ENCODE measurements at regions of chr6 and their contacts with region 1.

Region 1: DNA sequence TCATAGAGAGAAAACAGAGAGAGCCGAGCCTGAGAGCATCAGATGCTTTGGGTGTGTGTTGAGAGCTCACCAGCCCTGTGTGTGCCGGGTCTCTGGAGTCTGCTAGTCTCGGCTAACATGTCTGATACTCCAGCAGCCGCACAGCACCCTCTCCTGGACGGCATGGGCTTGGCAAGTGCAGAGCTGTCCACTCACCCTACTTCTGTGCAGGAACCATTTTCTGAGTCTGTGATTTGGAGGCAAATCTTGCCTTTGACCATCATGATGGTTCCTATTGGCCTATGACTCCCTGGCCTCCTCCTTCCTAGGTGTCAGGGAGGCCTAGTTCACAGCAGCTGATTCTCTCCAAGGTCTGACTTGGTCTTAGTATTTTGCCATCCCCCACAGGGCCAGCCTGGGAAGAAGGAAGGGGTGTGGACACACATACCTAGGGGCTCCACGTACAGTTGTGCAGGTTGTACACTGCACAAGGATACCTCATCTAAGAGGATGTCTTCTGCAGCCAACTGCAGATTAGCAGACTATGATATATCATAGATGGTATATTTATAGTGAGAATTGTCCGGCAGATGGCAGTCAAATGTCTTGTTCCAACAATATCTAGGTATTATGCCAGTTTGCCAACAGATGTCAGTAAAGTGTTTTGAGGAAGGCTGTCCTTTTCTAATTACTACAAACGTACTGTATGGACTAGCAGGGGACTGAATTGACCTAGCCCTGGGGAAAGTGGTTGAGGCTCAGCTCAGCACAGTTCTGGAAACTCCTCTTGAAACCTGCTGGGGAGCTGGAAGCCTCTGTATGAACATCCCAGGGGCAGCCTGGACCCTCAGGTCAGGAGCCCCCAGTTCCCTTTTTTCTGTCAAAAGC is 13.0 kb downstream of the FGD2 start:
- DNase-seq: peak; percentile 77
- ATAC-seq: peak; percentile 96
- H3K4me3 ChIP-seq: no peak overlapping the region
- H3K27ac ChIP-seq: no peak overlapping the region; the same call in 1 of the 2 replicates
- H3K4me1 ChIP-seq: peaks cover 18% of the 10 kb centered on the region
- H3K27me3 ChIP-seq: no peaks in the 10 kb centered on the region
- CTCF ChIP-seq: peak; percentile 96

Region 2: DNA sequence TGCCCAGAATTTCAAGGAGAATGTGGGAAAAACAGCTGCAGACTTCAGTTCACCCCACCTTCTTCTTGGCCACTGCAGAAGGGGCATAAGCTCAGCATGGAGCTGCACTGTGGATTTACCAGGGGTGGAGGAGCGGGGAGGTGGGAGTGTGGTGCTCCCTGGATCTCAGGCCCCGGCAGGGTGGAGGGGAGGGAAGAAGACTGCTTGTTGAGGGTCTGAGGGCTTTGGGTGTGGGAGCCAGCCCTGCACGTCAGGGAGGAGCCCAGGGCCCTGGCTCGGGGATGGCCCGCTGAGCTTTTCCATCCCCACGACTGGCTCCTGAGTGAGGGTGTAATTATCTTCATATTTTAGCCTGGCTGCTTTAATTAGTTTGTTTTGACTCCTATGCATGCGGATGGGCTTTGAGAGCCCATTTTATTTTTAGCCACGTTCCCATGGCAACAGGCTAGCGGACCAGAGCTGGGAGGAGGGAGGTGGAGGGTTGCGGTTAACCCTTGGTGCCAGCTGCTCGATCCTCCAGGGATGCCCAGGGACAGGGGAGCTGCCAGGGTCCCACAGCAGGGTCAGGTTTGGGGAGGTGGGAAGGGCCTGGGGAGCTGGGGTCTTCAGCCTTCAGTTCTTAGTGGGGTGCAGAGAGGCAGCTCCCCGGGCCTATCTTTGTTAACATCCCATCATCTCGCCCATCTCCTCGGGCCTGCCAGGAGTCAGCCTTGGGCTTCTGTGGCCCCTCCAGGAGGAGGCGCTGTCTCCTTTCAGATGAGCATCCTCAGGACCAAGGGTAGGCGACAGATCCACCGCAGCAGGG is 252.6 kb before region 1 on chr6:
- CTCF ChIA-PET with region 1: interaction called, 11 read pairs
- POLR2A ChIA-PET with region 1: no interaction called
- in situ Hi-C with region 1: no loop called
- intact Hi-C with region 1: loop called (anchors 1 kb)
- DNase-seq: no peak
- ATAC-seq: peak; percentile 94
- H3K4me3 ChIP-seq: no peak overlapping the region
- H3K27ac ChIP-seq: no peak overlapping the region
- H3K4me1 ChIP-seq: peaks cover 5% of the 10 kb centered on the region
- H3K27me3 ChIP-seq: no peaks in the 10 kb centered on the region
- CTCF ChIP-seq: peak; percentile 95

Region 3: GRCh38 chr6:36809941-36810803 is 208.3 kb before region 1 on chr6:
- CTCF ChIA-PET with region 1: no interaction called
- POLR2A ChIA-PET with region 1: no interaction called
- in situ Hi-C with region 1: no loop called
- intact Hi-C with region 1: no loop called
- DNase-seq: no peak
- ATAC-seq: no peak
- H3K4me3 ChIP-seq: no peak overlapping the region
- H3K27ac ChIP-seq: no peak overlapping the region
- H3K4me1 ChIP-seq: no peaks in the 10 kb centered on the region
- H3K27me3 ChIP-seq: no peaks in the 10 kb centered on the region
- CTCF ChIP-seq: peak; percentile 48; the same call in 1 of the 2 replicates

Region 4: GRCh38 chr6:36885461-36886401 is 132.7 kb before region 1 on chr6 and contains the start of gene C6orf89:
- CTCF ChIA-PET with region 1: interaction called, 15 read pairs
- POLR2A ChIA-PET with region 1: no interaction called
- in situ Hi-C with region 1: no loop called
- intact Hi-C with region 1: loop called (anchors 2 kb)
- DNase-seq: peak; percentile 89
- ATAC-seq: peak; percentile 100
- H3K4me3 ChIP-seq: peak within 1 kb of the TSS; percentile 73 to 100
- H3K27ac ChIP-seq: peak within 1 kb of the TSS; percentile 98
- H3K4me1 ChIP-seq: peaks cover 8% of the 10 kb centered on the region; the same call in 1 of the 2 replicates
- H3K27me3 ChIP-seq: no peaks in the 10 kb centered on the region
- CTCF ChIP-seq: peak; percentile 89
- total RNA-seq, gene C6orf89: 59.2 TPM

Region 5: DNA sequence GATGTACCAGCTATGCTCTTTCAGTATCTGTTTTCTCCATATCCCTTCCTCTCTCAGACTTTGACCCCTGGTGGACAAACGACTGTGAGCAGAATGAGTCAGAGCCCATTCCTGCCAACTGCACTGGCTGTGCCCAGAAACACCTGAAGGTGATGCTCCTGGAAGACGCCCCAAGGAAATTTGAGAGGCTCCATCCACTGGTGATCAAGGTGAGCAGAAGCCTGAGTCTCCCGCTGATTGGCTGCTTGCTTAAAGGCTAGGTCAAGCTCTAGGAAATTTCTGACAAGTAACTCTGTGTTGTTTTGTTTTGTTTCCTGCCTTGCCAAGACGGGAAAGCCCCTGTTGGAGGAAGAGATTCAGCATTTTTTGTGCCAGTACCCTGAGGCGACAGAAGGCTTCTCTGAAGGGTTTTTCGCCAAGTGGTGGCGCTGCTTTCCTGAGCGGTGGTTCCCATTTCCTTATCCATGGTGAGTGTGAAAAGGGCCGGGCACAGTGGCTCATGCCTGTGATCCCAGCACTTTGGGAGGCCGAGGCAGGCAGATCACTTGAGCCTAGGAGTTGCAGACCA is 104.1 kb before region 1 on chr6:
- CTCF ChIA-PET with region 1: interaction called, 11 read pairs
- POLR2A ChIA-PET with region 1: no interaction called
- in situ Hi-C with region 1: no loop called
- intact Hi-C with region 1: no loop called
- DNase-seq: peak; percentile 42
- ATAC-seq: peak; percentile 83
- H3K4me3 ChIP-seq: no peak overlapping the region
- H3K27ac ChIP-seq: no peak overlapping the region; the same call in 1 of the 2 replicates
- H3K4me1 ChIP-seq: peaks cover 36% of the 10 kb centered on the region
- H3K27me3 ChIP-seq: no peaks in the 10 kb centered on the region
- CTCF ChIP-seq: peak; percentile 65

Region 6: DNA sequence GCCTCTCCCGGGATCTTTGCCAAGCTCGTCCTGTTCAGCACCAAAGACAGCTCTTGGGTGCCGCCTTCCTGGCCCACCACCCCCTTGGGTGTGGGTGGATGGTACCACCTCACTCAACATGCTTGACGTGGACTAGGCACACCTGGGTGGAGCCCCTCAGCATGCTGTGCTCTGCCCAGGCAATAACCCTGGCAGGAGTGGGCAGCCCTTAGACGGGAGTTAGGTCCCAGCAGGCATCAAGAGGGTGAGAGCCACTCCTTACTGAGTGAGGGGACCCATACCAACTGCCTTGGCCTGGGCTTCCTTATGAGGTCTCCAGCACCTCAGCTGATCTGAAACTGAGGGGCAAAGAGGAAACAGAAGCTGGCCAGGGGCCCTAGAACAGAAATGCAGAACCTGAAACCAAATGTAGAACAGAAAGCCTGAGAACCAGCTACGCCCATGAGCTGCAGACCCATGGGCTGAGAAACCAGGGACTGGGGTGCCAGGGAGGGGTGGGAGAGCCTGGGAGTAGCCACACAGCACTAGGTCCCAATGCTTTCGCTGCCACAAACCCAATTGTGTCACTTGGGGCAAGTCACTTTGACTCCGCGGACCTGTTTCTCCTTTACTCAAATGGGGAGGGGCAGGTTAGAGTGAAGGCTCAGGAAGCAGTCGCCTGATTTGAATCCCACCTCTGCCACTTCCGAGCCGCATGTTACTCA is 10.9 kb before region 1 on chr6:
- CTCF ChIA-PET with region 1: interaction called, 11 read pairs
- POLR2A ChIA-PET with region 1: no interaction called
- in situ Hi-C with region 1: no loop called
- intact Hi-C with region 1: no loop called
- DNase-seq: no peak
- ATAC-seq: no peak
- H3K4me3 ChIP-seq: no peak overlapping the region
- H3K27ac ChIP-seq: no peak overlapping the region
- H3K4me1 ChIP-seq: no peaks in the 10 kb centered on the region
- H3K27me3 ChIP-seq: no peaks in the 10 kb centered on the region
- CTCF ChIP-seq: no peak

Region 7: DNA sequence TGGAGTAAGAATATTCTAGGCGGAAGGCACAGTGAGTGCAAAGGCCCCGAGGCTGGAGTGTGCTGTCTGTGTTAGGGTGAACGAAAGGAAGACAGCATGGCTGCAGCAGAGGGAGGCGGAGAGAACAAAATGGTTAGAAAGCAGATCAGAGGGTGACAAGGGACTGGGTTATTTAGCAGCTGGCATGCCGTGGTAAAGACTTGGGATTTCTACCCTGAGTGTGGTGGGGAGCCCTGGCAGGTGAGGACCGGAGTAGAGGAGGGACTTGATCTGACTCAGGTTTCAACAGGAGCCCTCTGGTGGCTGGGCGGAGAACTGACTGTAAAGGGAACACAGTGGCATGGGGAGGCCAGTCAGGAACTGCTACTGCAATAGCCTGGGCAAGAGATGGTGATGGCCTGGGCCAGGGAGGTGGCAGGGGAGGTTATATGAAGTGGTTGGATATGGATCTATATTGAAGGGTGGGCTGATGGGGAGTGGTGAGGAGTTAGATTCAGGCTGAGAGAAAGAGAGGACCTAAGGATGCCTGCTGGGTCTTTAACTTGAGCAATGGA is 189.5 kb after region 1 on chr6:
- CTCF ChIA-PET with region 1: interaction called, 72 read pairs
- POLR2A ChIA-PET with region 1: interaction called, 4 read pairs
- in situ Hi-C with region 1: no loop called
- intact Hi-C with region 1: loop called (anchors 1 kb)
- DNase-seq: peak; percentile 83
- ATAC-seq: peak; percentile 91
- H3K4me3 ChIP-seq: no peak overlapping the region
- H3K27ac ChIP-seq: no peak overlapping the region
- H3K4me1 ChIP-seq: no peaks in the 10 kb centered on the region; the same call in 1 of the 2 replicates
- H3K27me3 ChIP-seq: no peaks in the 10 kb centered on the region
- CTCF ChIP-seq: peak; percentile 90